B cell (primary cell): ENCODE measurements at regions of chr17 and their contacts with region 1.

Region 1: DNA sequence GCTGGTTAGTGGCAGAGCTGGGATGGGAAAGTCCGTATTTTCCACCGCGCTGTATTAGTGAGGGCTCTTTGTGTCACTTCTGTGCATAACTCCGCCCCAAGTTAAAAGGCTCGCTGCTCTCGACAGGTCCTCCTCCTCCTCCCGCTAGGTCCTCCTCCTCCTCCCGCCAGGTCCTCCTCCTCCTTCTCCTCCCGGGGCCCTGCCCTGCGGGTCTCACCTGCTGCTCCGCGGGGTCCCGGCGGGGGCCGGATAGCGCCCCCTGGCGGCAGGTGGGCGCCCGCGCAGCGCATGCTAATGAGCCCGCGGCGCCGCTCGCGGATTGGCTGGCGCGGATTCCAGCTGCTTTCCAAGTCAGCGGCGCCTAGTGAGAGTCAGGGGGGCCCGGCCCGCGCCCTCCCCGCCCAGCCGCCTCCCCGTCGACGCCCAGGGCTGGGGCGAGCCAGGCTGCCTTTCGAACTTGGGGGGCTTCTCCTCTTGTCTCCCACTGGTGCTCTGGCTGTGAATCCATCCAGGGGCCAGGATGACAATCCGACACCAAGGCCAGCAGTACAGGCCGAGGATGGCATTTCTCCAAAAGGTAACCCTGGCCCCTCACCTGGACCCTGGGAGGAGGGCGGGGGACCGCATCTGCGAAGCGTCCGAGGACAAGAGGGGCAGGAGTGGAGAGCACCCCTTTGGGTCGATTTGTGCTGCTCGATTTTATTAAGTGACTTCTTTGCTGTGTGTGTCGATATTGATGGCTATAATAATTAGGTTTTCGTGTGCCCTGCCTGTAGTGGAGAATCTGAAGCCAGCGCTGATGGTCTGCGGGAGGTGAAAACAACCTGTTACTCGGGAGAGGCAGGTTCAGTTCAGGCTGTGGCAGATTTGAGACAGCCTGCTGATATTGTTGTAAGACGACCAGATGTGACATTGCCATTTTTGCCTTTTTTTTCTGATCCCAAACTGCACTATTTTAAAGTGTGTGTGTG is at the start of gene RGS9:
- DNase-seq: peak; percentile 89
- ATAC-seq: peak; percentile 98
- H3K4me3 ChIP-seq: peak within 1 kb of the TSS in 4 of 5 experiments; percentile 32 to 55 (median 49)
- H3K4me3 Mint-ChIP-seq: peak within 1 kb of the TSS; percentile 86
- H3K27ac ChIP-seq: no peak within 1 kb of the TSS
- H3K27ac Mint-ChIP-seq: peak within 1 kb of the TSS; percentile 32
- H3K4me1 ChIP-seq: peaks cover 11 to 13% of the 10 kb centered on the region in 2 donors
- H3K4me1 Mint-ChIP-seq: peaks cover 18% of the 10 kb centered on the region
- H3K27me3 ChIP-seq: peaks cover 0 to 13% (median 8%) of the 10 kb centered on the region in 4 experiments
- H3K27me3 Mint-ChIP-seq: peaks cover 18% of the 10 kb centered on the region
- CTCF ChIP-seq: peak; percentile 85
- total RNA-seq, gene RGS9: 3.4 and 4.4 TPM in 2 replicates

Region 2: DNA sequence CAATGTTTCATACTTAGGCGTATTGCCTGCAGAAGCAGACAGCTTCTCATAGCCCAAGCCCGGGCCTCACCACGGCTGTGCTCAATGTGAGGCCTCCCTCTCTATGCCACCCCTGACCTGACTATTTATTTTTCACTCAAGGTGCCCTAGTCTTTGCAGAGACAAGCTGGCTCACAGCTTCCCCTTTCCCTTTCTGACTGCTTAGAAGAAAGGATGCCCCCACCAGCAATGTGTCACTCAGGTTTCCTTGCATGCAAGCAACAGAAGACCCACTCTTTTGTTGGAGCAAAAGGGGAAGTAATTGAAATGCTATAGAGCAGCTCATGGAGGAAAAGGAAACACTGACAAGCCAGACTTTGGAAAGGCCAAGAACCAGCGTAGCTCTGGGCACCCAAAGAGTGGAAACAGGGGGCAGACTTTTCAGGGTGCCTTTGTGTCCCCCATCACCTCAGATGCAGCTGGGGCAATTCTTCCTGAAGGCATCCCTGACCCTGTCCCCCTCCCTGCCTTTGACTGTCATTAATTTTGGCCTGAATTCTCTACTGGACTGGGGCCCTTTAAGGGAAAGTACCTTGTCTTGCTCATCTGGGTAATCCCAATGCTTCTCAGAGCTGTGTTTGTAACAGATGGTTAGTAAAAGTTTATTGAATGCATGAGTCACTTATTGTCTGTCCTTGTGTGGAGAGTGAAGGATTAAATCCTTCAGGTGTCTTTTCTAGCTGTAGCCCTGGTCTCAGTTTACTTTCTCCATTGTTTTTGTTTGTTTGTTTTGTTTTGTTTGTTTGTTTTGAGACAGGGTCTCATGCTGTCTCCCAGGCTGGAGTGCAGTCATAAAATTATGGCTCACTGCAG is 17.7 kb after region 1 on chr17:
- CTCF ChIA-PET with region 1: interaction called, 15 read pairs
- POLR2A ChIA-PET with region 1: interaction called, 4 read pairs
- intact Hi-C with region 1: no loop called
- DNase-seq: peak; percentile 22
- ATAC-seq: peak; percentile 76
- H3K4me3 ChIP-seq: no peak overlapping the region
- H3K4me3 Mint-ChIP-seq: peak overlapping the region; percentile 62
- H3K27ac ChIP-seq: no peak overlapping the region
- H3K27ac Mint-ChIP-seq: peak overlapping the region; percentile 87
- H3K4me1 ChIP-seq: peaks cover 10 to 14% of the 10 kb centered on the region in 2 donors
- H3K4me1 Mint-ChIP-seq: peaks cover 14% of the 10 kb centered on the region
- H3K27me3 ChIP-seq: no peaks in the 10 kb centered on the region
- H3K27me3 Mint-ChIP-seq: no peaks in the 10 kb centered on the region
- CTCF ChIP-seq: no peak

Region 3: GRCh38 chr17:65181237-65182061 is 44.1 kb after region 1 on chr17:
- CTCF ChIA-PET with region 1: interaction called, 3 read pairs
- POLR2A ChIA-PET with region 1: no interaction called
- intact Hi-C with region 1: loop called (anchors 5 kb)
- DNase-seq: no peak
- ATAC-seq: peak; percentile 28
- H3K4me3 ChIP-seq: no peak overlapping the region
- H3K4me3 Mint-ChIP-seq: no peak overlapping the region
- H3K27ac ChIP-seq: no peak overlapping the region
- H3K27ac Mint-ChIP-seq: peak overlapping the region; percentile 26
- H3K4me1 ChIP-seq: peaks cover 4 to 15% of the 10 kb centered on the region in 2 donors
- H3K4me1 Mint-ChIP-seq: peaks cover 35% of the 10 kb centered on the region
- H3K27me3 ChIP-seq: peaks cover 0 to 3% (median 0%) of the 10 kb centered on the region in 4 experiments
- H3K27me3 Mint-ChIP-seq: no peaks in the 10 kb centered on the region
- CTCF ChIP-seq: no peak

Region 4: GRCh38 chr17:65198653-65199382 is 61.5 kb after region 1 on chr17:
- CTCF ChIA-PET with region 1: interaction called, 12 read pairs
- POLR2A ChIA-PET with region 1: no interaction called
- intact Hi-C with region 1: loop called (anchors 1 kb)
- DNase-seq: peak; percentile 73
- ATAC-seq: peak; percentile 53
- H3K4me3 ChIP-seq: no peak overlapping the region
- H3K4me3 Mint-ChIP-seq: no peak overlapping the region
- H3K27ac ChIP-seq: no peak overlapping the region
- H3K27ac Mint-ChIP-seq: no peak overlapping the region
- H3K4me1 ChIP-seq: no peaks in the 10 kb centered on the region
- H3K4me1 Mint-ChIP-seq: peaks cover 2% of the 10 kb centered on the region
- H3K27me3 ChIP-seq: no peaks in the 10 kb centered on the region
- H3K27me3 Mint-ChIP-seq: no peaks in the 10 kb centered on the region
- CTCF ChIP-seq: peak; percentile 89

Region 5: DNA sequence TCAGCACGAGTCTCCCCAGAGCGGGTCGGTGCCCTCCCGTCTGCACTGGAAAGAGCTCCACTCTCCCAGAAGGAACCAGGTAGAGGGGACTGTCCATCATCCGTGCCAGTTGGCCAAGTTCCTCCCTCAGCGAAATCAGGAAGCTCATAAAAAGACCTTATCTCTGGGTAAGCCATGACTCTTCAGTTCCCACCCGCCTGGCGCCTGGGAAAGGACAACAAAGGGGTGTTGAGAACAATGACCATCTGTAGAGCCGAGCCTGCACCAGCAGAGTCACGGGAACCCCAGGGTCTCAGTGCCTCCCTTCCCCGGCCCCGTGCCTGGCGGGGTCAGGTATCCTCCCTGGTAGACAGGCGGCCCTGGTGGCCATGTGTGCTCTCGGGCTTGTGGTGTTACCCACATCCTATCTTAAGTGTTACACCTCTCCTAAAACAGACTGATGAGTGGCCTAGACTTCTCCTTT is 233.4 kb after region 1 on chr17:
- CTCF ChIA-PET with region 1: no interaction called
- POLR2A ChIA-PET with region 1: no interaction called
- intact Hi-C with region 1: no loop called
- DNase-seq: no peak
- ATAC-seq: no peak
- H3K4me3 ChIP-seq: no peak overlapping the region
- H3K4me3 Mint-ChIP-seq: no peak overlapping the region
- H3K27ac ChIP-seq: no peak overlapping the region
- H3K27ac Mint-ChIP-seq: no peak overlapping the region
- H3K4me1 ChIP-seq: no peaks in the 10 kb centered on the region
- H3K4me1 Mint-ChIP-seq: no peaks in the 10 kb centered on the region
- H3K27me3 ChIP-seq: peaks cover 0 to 2% (median 0%) of the 10 kb centered on the region in 4 experiments
- H3K27me3 Mint-ChIP-seq: peaks cover 42% of the 10 kb centered on the region
- CTCF ChIP-seq: no peak